Tibial artery (tissue), 4 donors: ENCODE measurements at regions of chr1 and their contacts with region 1.

Region 1: GRCh38 chr1:66262211-66262963 is 271.6 kb upstream of the SGIP1 start:
- DNase-seq: no peak
- H3K4me3 ChIP-seq: no peak overlapping the region
- H3K27ac ChIP-seq: peak overlapping the region in 1 of 2 donors; percentile 11
- H3K4me1 ChIP-seq: peaks cover 0 to 28% (median 7%) of the 10 kb centered on the region in 4 donors
- H3K27me3 ChIP-seq: no peaks in the 10 kb centered on the region
- CTCF ChIP-seq: no peak

Region 2: DNA sequence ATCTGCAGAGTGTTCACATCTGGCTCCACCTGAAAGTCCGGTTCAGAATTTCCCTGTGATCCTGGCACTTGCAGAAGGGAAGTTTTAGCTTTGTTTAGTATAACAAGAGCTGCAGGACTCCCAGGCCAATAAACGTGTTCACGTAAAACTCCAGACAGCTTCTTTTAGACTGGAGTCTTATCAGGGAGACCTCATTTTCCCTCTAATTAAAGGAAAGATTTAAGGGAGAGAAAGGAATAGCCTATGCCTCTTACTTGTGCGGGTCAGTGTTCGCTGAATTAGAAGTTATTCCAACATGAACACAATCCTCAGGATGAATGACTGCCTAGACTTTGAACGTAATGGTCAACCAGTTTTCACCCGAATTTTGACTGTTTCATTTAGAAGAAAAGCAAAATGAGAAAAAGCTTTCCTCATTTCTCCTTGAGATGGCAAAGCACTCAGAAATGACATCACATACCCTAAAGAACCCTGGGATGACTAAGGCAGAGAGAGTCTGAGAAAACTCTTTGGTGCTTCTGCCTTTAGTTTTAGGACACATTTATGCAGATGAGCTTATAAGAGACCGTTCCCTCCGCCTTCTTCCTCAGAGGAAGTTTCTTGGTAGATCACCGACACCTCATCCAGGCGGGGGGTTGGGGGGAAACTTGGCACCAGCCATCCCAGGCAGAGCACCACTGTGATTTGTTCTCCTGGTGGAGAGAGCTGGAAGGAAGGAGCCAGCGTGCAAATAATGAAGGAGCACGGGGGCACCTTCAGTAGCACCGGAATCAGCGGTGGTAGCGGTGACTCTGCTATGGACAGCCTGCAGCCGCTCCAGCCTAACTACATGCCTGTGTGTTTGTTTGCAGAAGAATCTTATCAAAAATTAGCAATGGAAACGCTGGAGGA is 69.5 kb after region 1 on chr1:
- intact Hi-C with region 1: loop called (anchors 5 kb)
- DNase-seq: peak; percentile 61 to 79
- H3K4me3 ChIP-seq: peak overlapping the region; percentile 48 to 59
- H3K27ac ChIP-seq: peak overlapping the region; percentile 79 to 88
- H3K4me1 ChIP-seq: peaks cover 0 to 49% (median 15%) of the 10 kb centered on the region in 4 donors
- H3K27me3 ChIP-seq: no peaks in the 10 kb centered on the region
- CTCF ChIP-seq: peak; percentile 47 to 52